Activated B cell treated with CpG ODN at 0.5 μM for 24 hours (primary cell): ENCODE measurements at regions of chr6 and their contacts with region 1.

Region 1: GRCh38 chr6:37819177-37819823 is at the start of gene ZFAND3:
- DNase-seq: peak; percentile 95
- ATAC-seq: peak; percentile 81
- H3K4me3 Mint-ChIP-seq: peak within 1 kb of the TSS; percentile 98
- H3K27ac Mint-ChIP-seq: peak within 1 kb of the TSS; percentile 99
- H3K4me1 Mint-ChIP-seq: peaks cover 51% of the 10 kb centered on the region
- H3K27me3 Mint-ChIP-seq: no peaks in the 10 kb centered on the region
- CTCF ChIP-seq: no peak
- total RNA-seq, gene ZFAND3: 56.3 and 60.1 TPM in 2 replicates

Region 2: GRCh38 chr6:36546920-36547645 is 1272.2 kb before region 1 on chr6 and contains the start of gene STK38:
- CTCF ChIA-PET with region 1: no interaction called
- POLR2A ChIA-PET with region 1: no interaction called
- intact Hi-C with region 1: loop called (anchors 5 kb)
- DNase-seq: peak; percentile 84
- ATAC-seq: peak; percentile 86
- H3K4me3 Mint-ChIP-seq: peak within 1 kb of the TSS; percentile 98
- H3K27ac Mint-ChIP-seq: peak within 1 kb of the TSS; percentile 96
- H3K4me1 Mint-ChIP-seq: peaks cover 65% of the 10 kb centered on the region
- H3K27me3 Mint-ChIP-seq: no peaks in the 10 kb centered on the region
- CTCF ChIP-seq: no peak
- total RNA-seq, gene STK38: 23.2 and 26.1 TPM in 2 replicates

Region 3: DNA sequence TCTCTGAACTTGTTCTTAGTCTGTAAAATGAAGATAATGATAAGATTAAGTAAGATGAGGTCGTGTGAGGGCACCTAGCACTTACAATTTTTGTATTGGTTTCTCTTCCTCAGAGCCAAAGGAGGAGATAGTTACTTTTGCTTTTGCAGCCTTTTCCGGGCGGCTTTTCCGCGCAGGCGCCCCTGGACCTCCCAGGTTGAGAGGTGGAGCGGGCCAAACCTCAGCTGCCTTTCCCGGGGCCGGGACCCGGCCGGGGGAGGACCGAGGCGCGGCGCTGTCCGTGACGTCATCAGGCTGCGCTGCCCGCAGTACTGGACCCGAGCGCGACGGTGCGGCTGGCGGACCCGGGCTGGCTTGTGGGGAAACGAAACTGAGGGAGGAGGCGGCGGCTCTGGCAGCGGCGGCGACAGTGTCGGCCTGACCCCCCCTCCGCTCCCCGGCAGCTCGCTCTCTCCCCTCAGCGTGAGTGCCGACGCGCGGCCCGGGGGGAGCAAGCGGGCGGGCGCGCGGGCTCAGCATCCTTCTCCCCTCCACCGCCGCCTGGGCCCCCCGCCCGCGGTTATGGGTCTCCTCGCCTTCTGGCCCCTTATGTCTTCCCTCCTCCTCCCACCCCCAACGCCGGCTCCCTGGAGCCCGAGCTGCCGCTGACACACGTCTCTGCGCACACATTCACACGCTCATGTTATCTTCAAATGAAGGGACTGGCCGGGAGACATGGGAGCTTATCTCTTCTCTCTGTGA is 386.2 kb before region 1 on chr6 and contains the start of gene CMTR1:
- CTCF ChIA-PET with region 1: no interaction called
- POLR2A ChIA-PET with region 1: interaction called, 4 read pairs
- intact Hi-C with region 1: loop called (anchors 1 kb)
- DNase-seq: peak; percentile 99
- ATAC-seq: peak; percentile 89
- H3K4me3 Mint-ChIP-seq: peak within 1 kb of the TSS; percentile 95
- H3K27ac Mint-ChIP-seq: peak within 1 kb of the TSS; percentile 97
- H3K4me1 Mint-ChIP-seq: peaks cover 34% of the 10 kb centered on the region
- H3K27me3 Mint-ChIP-seq: peaks cover 2% of the 10 kb centered on the region
- CTCF ChIP-seq: no peak
- total RNA-seq, gene CMTR1: 59.0 and 65.7 TPM in 2 replicates

Region 4: DNA sequence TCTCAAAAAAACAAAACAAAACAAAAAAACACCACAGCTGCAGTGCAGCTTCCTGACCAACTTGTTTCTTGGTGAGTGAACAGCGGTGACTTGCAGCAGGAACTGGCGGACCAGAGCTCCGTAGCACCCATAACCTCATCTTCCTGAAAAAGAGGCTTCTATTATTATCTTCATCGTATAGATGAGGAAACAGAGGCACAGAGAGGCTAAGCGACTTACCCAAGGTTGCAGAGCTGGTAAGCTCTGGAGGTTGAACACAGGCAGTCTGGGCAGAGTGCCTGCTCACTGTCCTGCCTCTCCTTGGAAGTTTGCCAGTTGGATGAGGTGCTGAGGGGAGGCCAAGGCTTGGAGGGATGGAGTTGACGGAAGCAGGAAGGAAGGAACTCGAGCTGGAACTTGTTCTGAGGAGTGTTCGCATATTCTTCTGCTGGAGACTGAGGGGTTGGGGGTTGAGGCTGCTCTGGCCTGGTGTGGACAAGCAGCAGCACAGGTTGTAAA is 271.7 kb before region 1 on chr6:
- CTCF ChIA-PET with region 1: no interaction called
- POLR2A ChIA-PET with region 1: no interaction called
- intact Hi-C with region 1: loop called (anchors 5 kb)
- DNase-seq: no peak
- ATAC-seq: peak; percentile 52
- H3K4me3 Mint-ChIP-seq: peak overlapping the region; percentile 12
- H3K27ac Mint-ChIP-seq: peak overlapping the region; percentile 72
- H3K4me1 Mint-ChIP-seq: peaks cover 75% of the 10 kb centered on the region
- H3K27me3 Mint-ChIP-seq: no peaks in the 10 kb centered on the region
- CTCF ChIP-seq: no peak

Region 5: DNA sequence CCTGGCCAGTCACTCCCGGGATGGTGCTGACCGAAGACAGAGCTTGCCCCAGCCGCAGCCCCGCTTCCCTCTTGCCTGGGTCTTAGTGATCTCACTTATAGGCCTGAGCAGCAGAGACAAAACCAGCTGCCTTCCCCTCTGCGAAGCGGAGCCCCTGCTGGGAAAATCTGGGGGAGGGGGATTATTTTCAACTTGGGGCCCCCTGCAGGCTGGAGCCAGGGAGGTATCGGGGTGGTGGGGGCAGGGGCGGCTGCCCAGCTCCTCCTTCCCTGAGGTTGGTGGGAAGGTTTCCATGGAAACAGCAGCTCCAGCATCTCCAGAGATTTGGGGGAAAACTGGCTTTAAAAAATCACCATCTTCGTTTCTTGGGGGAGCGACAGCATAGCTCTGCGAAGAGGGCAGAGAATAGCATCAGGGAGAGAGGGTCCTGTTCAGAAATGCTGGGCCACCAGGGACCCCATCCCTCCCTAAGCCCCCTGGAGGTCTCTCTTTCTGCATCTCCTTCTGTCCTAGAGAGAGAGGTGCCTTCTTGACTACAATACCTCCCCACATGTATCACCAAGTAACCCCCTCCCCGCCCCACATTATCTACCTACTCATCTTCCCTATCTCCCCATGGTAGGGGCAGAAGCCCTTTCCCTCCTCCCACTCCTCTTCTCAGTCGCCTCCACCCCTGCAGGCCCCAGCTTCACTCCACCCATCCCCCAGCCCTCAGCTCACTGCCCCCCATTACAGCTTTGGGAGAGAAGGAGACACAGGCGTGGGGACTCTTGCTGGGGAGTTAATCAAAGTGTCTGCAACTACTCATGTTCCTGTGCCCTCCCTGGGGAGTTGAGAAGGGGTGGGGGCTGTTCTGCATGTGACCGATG is 231.2 kb before region 1 on chr6:
- CTCF ChIA-PET with region 1: no interaction called
- POLR2A ChIA-PET with region 1: no interaction called
- intact Hi-C with region 1: no loop called
- DNase-seq: no peak
- ATAC-seq: no peak
- H3K4me3 Mint-ChIP-seq: no peak overlapping the region
- H3K27ac Mint-ChIP-seq: no peak overlapping the region
- H3K4me1 Mint-ChIP-seq: peaks cover 12% of the 10 kb centered on the region
- H3K27me3 Mint-ChIP-seq: peaks cover 9% of the 10 kb centered on the region
- CTCF ChIP-seq: no peak

Region 6: DNA sequence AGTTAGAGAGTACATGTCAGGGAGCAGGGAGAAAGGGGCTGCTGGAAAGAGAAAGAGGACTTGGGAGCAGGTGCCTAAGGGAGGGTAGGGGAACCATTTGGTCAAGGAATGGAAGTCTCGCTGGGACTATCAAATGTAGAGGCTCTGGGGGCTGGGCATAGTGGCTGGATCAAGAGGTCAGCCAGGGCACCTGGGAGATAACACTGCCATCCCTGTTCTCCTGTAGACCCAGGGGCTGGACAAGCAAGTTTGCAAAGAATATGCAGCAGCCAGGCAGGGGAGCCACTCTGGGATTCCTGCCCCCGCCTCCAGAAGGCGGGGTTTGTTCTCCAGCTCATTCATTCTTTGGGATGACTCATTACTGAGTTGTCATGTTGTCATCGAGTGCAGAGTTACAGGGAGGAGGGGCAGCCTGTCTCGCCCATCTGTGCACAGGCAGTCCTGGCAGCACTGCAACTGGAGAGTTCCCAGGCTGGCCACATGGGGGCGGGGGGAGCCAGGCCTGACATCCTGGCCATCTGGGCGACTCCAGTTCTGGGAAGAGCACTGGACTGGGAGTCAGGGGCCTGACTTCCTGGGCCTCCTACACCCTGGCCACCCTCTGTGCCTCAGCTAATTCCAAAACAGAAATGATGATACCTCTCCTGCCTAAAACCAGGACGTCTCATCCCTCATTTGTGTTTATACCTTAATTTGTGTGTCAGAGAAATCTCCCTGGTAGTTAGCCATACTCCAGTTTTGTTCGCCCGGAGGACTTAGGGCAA is 28.0 kb before region 1 on chr6:
- CTCF ChIA-PET with region 1: interaction called, 3 read pairs
- POLR2A ChIA-PET with region 1: interaction called, 8 read pairs
- intact Hi-C with region 1: loop called (anchors 1 kb)
- DNase-seq: peak; percentile 66
- ATAC-seq: peak; percentile 100
- H3K4me3 Mint-ChIP-seq: no peak overlapping the region
- H3K27ac Mint-ChIP-seq: no peak overlapping the region
- H3K4me1 Mint-ChIP-seq: peaks cover 7% of the 10 kb centered on the region
- H3K27me3 Mint-ChIP-seq: no peaks in the 10 kb centered on the region
- CTCF ChIP-seq: peak; percentile 73

Region 7: DNA sequence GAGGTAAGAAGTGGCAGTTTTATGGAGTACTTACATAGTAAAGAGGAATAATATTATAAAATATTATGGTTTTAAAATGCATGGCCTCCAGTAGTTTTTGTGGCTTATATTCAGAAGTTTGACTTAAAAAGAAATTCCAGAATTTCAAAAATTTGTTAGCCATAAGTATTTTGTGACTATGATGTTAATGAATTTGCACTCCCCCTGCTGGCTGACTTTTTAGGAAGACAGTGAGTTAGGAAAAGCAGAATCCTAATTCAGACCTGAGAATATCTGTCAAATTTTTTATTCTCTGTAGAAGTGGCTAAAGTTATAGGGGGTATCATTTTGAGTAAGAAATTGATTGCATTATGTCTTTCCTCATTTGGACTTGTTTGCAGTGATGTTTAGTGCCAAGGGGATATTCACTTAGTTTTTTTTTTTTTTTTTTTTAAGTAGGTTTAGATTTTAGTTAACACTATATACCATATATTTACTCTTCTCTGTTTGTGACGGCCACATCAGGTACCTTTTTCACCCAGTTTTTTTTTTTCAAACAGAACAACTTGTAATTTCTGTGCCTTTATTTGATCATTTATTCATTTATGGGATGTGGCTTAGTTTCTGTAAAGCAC is 41.0 kb after region 1 on chr6:
- CTCF ChIA-PET with region 1: no interaction called
- POLR2A ChIA-PET with region 1: interaction called, 3 read pairs
- intact Hi-C with region 1: loop called (anchors 2 kb)
- DNase-seq: no peak
- ATAC-seq: no peak
- H3K4me3 Mint-ChIP-seq: no peak overlapping the region
- H3K27ac Mint-ChIP-seq: no peak overlapping the region
- H3K4me1 Mint-ChIP-seq: peaks cover 31% of the 10 kb centered on the region
- H3K27me3 Mint-ChIP-seq: no peaks in the 10 kb centered on the region
- CTCF ChIP-seq: no peak

Region 8: DNA sequence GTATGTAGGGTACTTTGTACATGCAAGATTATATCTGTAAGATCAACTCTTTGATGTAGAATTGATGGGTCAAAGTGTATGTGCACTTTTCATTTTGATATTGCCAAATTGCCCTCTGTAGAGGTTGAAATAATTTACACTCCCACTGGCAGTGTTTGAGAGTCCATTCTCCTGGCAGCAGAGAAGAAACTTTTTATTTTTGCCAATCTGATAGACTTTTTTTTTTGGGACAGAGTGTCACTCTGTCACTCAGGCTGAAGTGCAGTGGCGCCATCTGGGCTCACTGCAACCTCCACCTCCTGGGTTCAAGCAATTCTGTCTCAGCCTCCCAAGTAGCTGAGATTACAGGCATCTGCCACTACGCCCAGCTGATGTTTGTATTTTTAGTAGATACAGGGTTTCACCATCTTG is 199.5 kb after region 1 on chr6:
- CTCF ChIA-PET with region 1: no interaction called
- POLR2A ChIA-PET with region 1: no interaction called
- intact Hi-C with region 1: no loop called
- DNase-seq: no peak
- ATAC-seq: no peak
- H3K4me3 Mint-ChIP-seq: no peak overlapping the region
- H3K27ac Mint-ChIP-seq: no peak overlapping the region
- H3K4me1 Mint-ChIP-seq: peaks cover 44% of the 10 kb centered on the region
- H3K27me3 Mint-ChIP-seq: no peaks in the 10 kb centered on the region
- CTCF ChIP-seq: no peak